ENCODE measurements at regions of chr5 and their contacts with region 1.

Region 1: DNA sequence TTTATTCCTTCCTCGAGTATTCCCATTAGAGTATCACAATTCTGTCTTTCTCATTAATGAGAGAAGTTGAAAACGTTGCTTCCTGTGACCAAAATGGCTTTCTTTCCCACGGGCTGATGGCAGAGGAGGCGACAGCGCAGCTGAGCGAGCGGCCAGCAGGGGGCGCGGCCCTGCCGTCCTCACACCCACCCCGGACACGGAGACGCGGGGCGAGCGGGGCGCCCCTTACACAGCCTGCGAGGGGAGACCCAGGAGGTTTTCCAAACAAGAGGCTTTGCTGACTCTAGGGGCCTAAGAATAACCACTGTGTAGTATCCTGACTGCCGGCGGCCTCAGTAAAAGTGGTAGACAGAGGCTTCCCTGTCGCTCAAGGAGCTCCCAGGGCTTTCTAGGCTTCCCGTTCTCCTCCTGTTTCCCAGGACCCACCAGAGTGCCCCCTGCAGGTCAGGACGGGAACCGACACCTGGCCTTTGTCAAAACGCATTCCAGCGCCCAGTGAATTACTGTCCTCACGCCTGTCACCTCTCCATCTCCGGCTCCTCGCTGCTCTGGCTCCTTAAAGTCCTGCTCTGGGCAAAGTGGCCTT is 27.3 kb upstream of the FGF1 start:
- DNase-seq: peak; percentile 70 to 89
- ATAC-seq: peak; percentile 89 to 93
- H3K4me3 ChIP-seq: peak overlapping the region; percentile 49
- H3K27ac ChIP-seq: peak overlapping the region; percentile 82 to 92
- H3K4me1 ChIP-seq: peaks cover 5% of the 10 kb centered on the region; the same call in 2 of the 3 replicates
- CTCF ChIP-seq: peak; percentile 100
- EP300 ChIP-seq: no peak
- POLR2A ChIP-seq: no peak
- RAD21 ChIP-seq: peak; percentile 43 to 78

Region 2: GRCh38 chr5:142512043-142513042 is 200.9 kb before region 1 on chr5:
- CTCF ChIA-PET with region 1: no interaction called
- POLR2A ChIA-PET with region 1: no interaction called
- DNase-seq: peak in 1 of 2 experiments; percentile 31
- ATAC-seq: peak in 1 of 2 experiments; percentile 51; a peak in 2 of 6 replicates
- H3K4me3 ChIP-seq: no peak overlapping the region
- H3K27ac ChIP-seq: no peak overlapping the region
- H3K4me1 ChIP-seq: peaks cover 24% of the 10 kb centered on the region
- CTCF ChIP-seq: no peak
- EP300 ChIP-seq: no peak
- POLR2A ChIP-seq: no peak
- RAD21 ChIP-seq: no peak

Region 3: DNA sequence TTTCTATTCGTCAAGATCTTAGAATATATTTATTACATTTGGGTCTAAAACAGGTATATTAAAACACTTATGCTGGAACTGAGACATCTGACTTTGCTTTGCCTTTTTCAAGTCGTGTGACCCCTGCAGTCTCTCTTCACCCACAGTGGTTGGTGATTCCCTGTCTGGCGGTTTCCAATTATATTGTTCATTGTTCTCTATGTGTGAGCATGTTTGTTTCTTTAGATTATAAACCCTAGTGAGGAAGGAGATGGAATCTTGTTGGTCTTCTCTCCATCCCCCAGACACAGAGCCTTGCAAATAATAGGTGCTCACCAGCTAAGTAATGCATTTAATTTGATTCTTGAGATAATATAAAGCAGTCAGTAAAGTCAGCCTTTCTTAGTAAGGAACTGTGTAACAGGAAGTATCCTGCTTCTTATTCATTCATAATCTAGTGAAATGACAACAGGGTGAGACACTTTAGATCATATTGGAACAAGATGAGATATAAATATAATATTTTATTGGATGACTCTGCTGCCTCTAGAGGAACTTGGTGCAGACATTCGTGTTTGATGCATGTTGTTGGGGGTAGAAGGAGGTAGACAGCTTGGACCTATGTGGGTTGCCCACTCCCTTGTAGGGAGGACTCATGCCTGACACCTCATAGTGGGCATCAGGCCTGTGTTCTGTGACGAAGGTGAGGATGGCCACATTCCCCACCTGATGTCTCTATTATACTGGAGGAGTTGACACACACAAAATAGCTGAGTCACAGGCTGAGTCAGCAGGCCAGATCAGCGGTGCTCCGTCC is 115.5 kb before region 1 on chr5:
- CTCF ChIA-PET with region 1: interaction called, 12 read pairs
- POLR2A ChIA-PET with region 1: no interaction called
- DNase-seq: peak; percentile 50 to 85
- ATAC-seq: peak; percentile 83 to 85
- H3K4me3 ChIP-seq: no peak overlapping the region
- H3K27ac ChIP-seq: peak overlapping the region; percentile 83 to 85
- H3K4me1 ChIP-seq: peaks cover 51% of the 10 kb centered on the region
- CTCF ChIP-seq: peak; percentile 20; the same call in 1 of the 3 replicates
- EP300 ChIP-seq: no peak
- POLR2A ChIP-seq: no peak
- RAD21 ChIP-seq: no peak

Region 4: DNA sequence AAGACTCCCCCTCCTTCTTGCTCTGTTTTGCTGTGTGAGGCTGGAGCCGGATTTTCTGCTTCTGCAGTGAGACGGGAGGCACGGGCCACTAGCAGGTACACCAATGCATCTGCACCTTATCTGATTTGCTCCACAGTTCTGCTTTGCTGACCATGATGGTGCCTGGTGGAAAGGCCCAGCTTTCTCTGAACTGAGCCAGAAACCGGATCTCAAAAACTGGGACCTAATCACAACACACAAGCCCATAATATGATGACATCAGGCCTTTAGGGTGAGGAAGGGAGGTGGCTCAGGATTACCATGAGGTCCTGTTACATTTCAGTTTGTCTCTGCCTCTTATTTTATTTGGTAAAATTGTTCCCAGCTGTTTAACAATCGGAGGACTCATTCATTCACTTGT is 77.1 kb before region 1 on chr5:
- CTCF ChIA-PET with region 1: interaction called, 10 read pairs
- POLR2A ChIA-PET with region 1: no interaction called
- DNase-seq: no peak
- ATAC-seq: no peak
- H3K4me3 ChIP-seq: no peak overlapping the region
- H3K27ac ChIP-seq: no peak overlapping the region
- H3K4me1 ChIP-seq: no peaks in the 10 kb centered on the region
- CTCF ChIP-seq: no peak
- EP300 ChIP-seq: no peak
- POLR2A ChIP-seq: no peak
- RAD21 ChIP-seq: no peak

Region 5: GRCh38 chr5:142669477-142669876 is 43.7 kb before region 1 on chr5:
- CTCF ChIA-PET with region 1: interaction called, 19 read pairs
- POLR2A ChIA-PET with region 1: no interaction called
- DNase-seq: no peak
- ATAC-seq: no peak
- H3K4me3 ChIP-seq: no peak overlapping the region
- H3K27ac ChIP-seq: no peak overlapping the region
- H3K4me1 ChIP-seq: peaks cover 4% of the 10 kb centered on the region; the same call in 1 of the 3 replicates
- CTCF ChIP-seq: no peak
- EP300 ChIP-seq: no peak
- POLR2A ChIP-seq: no peak
- RAD21 ChIP-seq: no peak

Region 6: DNA sequence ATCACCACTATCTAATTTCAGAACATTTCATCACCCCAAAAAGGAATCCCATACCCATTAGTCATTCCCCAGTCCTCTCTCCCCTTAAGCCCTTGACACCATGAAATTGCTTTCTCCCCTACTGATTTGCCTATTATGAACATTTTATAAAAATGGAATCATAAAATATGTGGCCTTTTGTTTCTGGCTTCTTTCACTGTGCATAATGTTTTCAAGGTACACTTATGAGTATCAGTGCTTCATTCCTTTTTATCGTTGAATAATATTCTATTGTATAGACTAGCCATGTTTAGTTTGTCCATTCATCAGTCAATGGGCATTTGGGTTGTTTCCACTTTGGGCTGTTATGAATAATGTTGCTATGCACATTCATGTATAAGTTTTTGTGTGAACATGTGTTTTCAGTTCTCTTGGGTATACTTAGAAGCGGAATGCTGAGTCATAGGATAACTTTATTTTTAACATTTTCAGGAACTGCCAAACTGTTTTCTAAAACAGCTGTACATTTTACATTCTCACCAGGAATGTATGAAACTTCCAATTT is 13.0 kb after region 1 on chr5:
- CTCF ChIA-PET with region 1: interaction called, 57 read pairs
- POLR2A ChIA-PET with region 1: no interaction called
- DNase-seq: no peak
- ATAC-seq: no peak
- H3K4me3 ChIP-seq: no peak overlapping the region
- H3K27ac ChIP-seq: peak overlapping the region in 1 of 2 experiments; percentile 46; a peak in 2 of 6 replicates
- H3K4me1 ChIP-seq: peaks cover 10% of the 10 kb centered on the region; the same call in 2 of the 3 replicates
- CTCF ChIP-seq: no peak
- EP300 ChIP-seq: no peak
- POLR2A ChIP-seq: no peak
- RAD21 ChIP-seq: no peak

Region 7: DNA sequence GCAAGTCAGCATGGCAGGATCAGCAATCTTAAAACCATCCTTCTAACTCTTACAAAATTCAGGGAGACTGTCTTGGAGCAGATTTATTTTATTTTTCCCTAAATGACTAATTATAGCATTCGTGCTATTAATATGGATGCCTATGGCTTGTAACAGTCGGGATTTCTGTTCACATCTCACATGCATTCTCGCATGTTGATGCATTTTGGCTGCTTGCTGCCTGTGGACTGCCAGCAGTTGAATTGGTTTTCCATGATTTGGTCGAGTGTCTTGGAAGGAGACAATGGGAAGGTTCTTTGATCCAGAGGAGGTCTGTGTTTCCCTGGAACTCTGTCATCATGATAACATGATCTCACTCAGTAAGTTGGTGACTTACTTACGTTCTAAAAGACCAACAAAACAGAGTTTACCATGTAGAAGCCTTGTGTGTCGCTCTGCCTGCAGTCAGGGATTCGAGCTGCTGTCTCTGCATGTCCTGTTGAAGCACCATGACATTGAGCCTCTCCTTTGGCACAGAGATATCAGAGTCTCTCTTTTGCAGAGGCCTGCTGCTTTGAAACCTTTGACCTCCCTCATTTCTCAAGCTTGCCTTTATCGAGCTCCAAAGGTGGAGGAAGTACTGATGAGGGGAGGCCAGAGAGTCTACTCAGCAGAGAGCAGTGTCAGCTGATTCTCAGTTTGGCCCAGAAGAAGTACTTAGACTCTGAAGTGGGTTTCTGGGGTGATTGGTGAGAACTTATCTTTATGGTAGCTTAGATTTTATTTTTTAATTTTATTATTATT is 139.4 kb after region 1 on chr5:
- CTCF ChIA-PET with region 1: interaction called, 12 read pairs
- POLR2A ChIA-PET with region 1: no interaction called
- DNase-seq: no peak
- ATAC-seq: no peak
- H3K4me3 ChIP-seq: no peak overlapping the region
- H3K27ac ChIP-seq: no peak overlapping the region
- H3K4me1 ChIP-seq: peaks cover 9% of the 10 kb centered on the region; the same call in 2 of the 3 replicates
- CTCF ChIP-seq: no peak
- EP300 ChIP-seq: no peak
- POLR2A ChIP-seq: no peak
- RAD21 ChIP-seq: no peak

Region 8: GRCh38 chr5:142915813-142916424 is 202.7 kb after region 1 on chr5:
- CTCF ChIA-PET with region 1: interaction called, 17 read pairs
- POLR2A ChIA-PET with region 1: no interaction called
- DNase-seq: peak; percentile 52 to 63
- ATAC-seq: peak; percentile 94 to 95; a peak in 5 of 6 replicates
- H3K4me3 ChIP-seq: no peak overlapping the region
- H3K27ac ChIP-seq: no peak overlapping the region
- H3K4me1 ChIP-seq: peaks cover 10% of the 10 kb centered on the region
- CTCF ChIP-seq: peak; percentile 67
- EP300 ChIP-seq: no peak
- POLR2A ChIP-seq: no peak
- RAD21 ChIP-seq: peak; percentile 61 to 78

Measured in A549 (cell line).